ENCODE measurements at regions of chr19 and their contacts with region 1.

Region 1: GRCh38 chr19:18328340-18329034 is 5.6 kb upstream of the LSM4 start:
- DNase-seq: peak; percentile 95
- H3K4me3 Mint-ChIP-seq: peak overlapping the region; percentile 42
- H3K27ac Mint-ChIP-seq: no peak overlapping the region
- H3K4me1 Mint-ChIP-seq: peaks cover 25% of the 10 kb centered on the region
- H3K27me3 Mint-ChIP-seq: peaks cover 27% of the 10 kb centered on the region

Region 2: GRCh38 chr19:18340190-18340989 is 11.9 kb after region 1 on chr19 and contains the start of gene PGPEP1:
- CTCF ChIA-PET with region 1: interaction called, 15 read pairs
- DNase-seq: peak; percentile 67
- H3K4me3 Mint-ChIP-seq: peak within 1 kb of the TSS; percentile 83
- H3K27ac Mint-ChIP-seq: peak within 1 kb of the TSS; percentile 81
- H3K4me1 Mint-ChIP-seq: peaks cover 21% of the 10 kb centered on the region
- H3K27me3 Mint-ChIP-seq: peaks cover 17% of the 10 kb centered on the region

Measured in activated naive CD4-positive, alpha-beta T cell treated with anti-CD3 and anti-CD28 coated beads, Interleukin-2, amount 10 ng/mL, durations not matched to agents 7 days and 5 days (primary cell).